ENCODE measurements at regions of chr10 and their contacts with region 1.

Region 1: DNA sequence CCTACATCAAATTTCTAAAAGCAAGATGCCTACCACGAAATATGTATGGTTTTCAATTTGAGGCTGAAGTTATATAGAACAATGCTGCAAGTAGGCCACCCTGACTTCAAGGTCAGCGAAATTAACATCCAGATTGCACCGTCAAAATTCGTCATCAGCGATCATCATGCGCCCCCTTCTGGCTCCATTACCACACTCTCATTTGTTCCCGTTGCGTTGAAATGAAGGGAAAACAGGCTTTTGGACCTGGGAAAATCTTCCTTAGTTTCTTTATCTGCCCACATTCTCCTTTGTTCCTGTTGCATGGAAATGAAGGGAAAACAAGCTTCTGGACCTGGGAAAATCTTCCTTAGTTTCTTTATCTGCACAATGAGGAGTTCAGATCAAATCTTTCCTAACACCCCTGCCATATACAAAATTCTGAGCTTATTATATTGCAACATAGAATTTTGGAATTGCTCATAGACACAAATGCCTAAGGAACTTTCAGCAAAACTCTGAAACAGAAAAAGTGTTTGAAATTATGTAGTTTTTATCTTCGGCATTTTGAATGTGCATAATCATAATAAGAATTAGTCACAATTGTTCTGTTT is 98.2 kb upstream of the PRKCQ start:
- DNase-seq: peak; percentile 53 to 59 (median 55)
- H3K4me3 ChIP-seq: no peak overlapping the region
- H3K4me3 Mint-ChIP-seq: no peak overlapping the region
- H3K27ac ChIP-seq: no peak overlapping the region
- H3K27ac Mint-ChIP-seq: peak overlapping the region in 1 of 7 donors; percentile 52
- H3K4me1 ChIP-seq: no peaks in the 10 kb centered on the region
- H3K4me1 Mint-ChIP-seq: peaks cover 0 to 6% (median 5%) of the 10 kb centered on the region in 4 donors
- H3K27me3 ChIP-seq: peaks cover 3% of the 10 kb centered on the region
- H3K27me3 Mint-ChIP-seq: peaks cover 4 to 9% of the 10 kb centered on the region in 2 donors

Region 2: DNA sequence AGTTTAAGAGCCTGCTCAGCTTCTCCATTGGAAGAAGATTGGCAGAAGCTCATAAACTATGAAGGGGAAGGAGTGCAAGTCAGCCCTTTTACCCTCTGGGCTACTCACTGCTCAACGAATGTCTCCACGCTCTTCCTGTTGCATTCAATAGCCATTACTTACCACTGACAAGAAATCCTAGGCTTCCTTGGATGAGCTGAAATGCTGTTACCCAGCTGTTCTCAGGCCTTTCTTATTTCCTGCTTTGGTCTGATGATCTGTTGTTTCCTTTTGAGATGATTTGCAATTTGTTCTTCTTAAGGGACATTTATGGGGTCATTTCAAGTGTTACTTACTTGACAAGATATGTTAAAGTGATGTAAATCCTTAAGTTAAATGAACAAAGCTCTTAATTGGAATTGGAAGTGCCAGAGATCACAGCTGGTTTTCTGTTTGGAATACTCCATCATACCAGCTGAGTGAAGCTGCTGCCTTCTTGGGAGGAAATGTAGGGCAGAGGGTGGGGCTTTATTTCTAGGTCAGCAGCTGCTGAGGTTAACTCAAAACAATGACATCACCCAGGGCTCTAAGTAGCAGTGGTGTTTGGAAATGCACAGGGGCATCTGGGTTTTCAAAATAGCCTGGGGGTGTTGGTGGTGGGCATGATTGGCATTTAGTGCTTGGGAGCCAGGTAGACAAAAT is 268.2 kb before region 1 on chr10:
- CTCF ChIA-PET with region 1: interaction called, 74 read pairs
- POLR2A ChIA-PET with region 1: no interaction called
- intact Hi-C with region 1: no loop called
- DNase-seq: peak; percentile 71 to 84 (median 79)
- H3K4me3 ChIP-seq: peak overlapping the region; percentile 11 to 34
- H3K4me3 Mint-ChIP-seq: peak overlapping the region; percentile 76 to 93 (median 81)
- H3K27ac ChIP-seq: peak overlapping the region; percentile 78
- H3K27ac Mint-ChIP-seq: peak overlapping the region; percentile 93 to 99 (median 98)
- H3K4me1 ChIP-seq: peaks cover 50% of the 10 kb centered on the region
- H3K4me1 Mint-ChIP-seq: peaks cover 31 to 66% (median 44%) of the 10 kb centered on the region in 4 donors
- H3K27me3 ChIP-seq: no peaks in the 10 kb centered on the region
- H3K27me3 Mint-ChIP-seq: no peaks in the 10 kb centered on the region

Region 3: GRCh38 chr10:6593241-6593671 is 85.1 kb before region 1 on chr10:
- CTCF ChIA-PET with region 1: no interaction called
- POLR2A ChIA-PET with region 1: no interaction called
- intact Hi-C with region 1: no loop called
- DNase-seq: peak in 4 of 5 donors; percentile 24 to 68 (median 28)
- H3K4me3 ChIP-seq: no peak overlapping the region
- H3K4me3 Mint-ChIP-seq: peak overlapping the region; percentile 39 to 81 (median 74)
- H3K27ac ChIP-seq: peak overlapping the region; percentile 40
- H3K27ac Mint-ChIP-seq: peak overlapping the region; percentile 88 to 97 (median 94)
- H3K4me1 ChIP-seq: peaks cover 93% of the 10 kb centered on the region
- H3K4me1 Mint-ChIP-seq: peaks cover 63 to 97% (median 77%) of the 10 kb centered on the region in 4 donors
- H3K27me3 ChIP-seq: no peaks in the 10 kb centered on the region
- H3K27me3 Mint-ChIP-seq: no peaks in the 10 kb centered on the region

Region 4: GRCh38 chr10:6667679-6668270 is 10.5 kb before region 1 on chr10:
- CTCF ChIA-PET with region 1: interaction called, 27 read pairs
- POLR2A ChIA-PET with region 1: no interaction called
- intact Hi-C with region 1: loop called (anchors 1 kb)
- DNase-seq: peak in 4 of 5 donors; percentile 15 to 34 (median 26)
- H3K4me3 ChIP-seq: no peak overlapping the region
- H3K4me3 Mint-ChIP-seq: peak overlapping the region in 1 of 8 donors; percentile 10
- H3K27ac ChIP-seq: no peak overlapping the region
- H3K27ac Mint-ChIP-seq: no peak overlapping the region
- H3K4me1 ChIP-seq: peaks cover 22% of the 10 kb centered on the region
- H3K4me1 Mint-ChIP-seq: peaks cover 15 to 28% (median 21%) of the 10 kb centered on the region in 4 donors
- H3K27me3 ChIP-seq: no peaks in the 10 kb centered on the region
- H3K27me3 Mint-ChIP-seq: no peaks in the 10 kb centered on the region